ENCODE measurements at regions of chr1 and their contacts with region 1.

Region 1: GRCh38 chr1:3785456-3786157 is 10.7 kb downstream of the LRRC47 start:
- DNase-seq: peak; percentile 36
- H3K4me3 ChIP-seq: no peak overlapping the region
- H3K27ac ChIP-seq: no peak overlapping the region
- H3K4me1 ChIP-seq: no peaks in the 10 kb centered on the region
- H3K27me3 ChIP-seq: no peaks in the 10 kb centered on the region
- CTCF ChIP-seq: peak; percentile 50

Region 2: DNA sequence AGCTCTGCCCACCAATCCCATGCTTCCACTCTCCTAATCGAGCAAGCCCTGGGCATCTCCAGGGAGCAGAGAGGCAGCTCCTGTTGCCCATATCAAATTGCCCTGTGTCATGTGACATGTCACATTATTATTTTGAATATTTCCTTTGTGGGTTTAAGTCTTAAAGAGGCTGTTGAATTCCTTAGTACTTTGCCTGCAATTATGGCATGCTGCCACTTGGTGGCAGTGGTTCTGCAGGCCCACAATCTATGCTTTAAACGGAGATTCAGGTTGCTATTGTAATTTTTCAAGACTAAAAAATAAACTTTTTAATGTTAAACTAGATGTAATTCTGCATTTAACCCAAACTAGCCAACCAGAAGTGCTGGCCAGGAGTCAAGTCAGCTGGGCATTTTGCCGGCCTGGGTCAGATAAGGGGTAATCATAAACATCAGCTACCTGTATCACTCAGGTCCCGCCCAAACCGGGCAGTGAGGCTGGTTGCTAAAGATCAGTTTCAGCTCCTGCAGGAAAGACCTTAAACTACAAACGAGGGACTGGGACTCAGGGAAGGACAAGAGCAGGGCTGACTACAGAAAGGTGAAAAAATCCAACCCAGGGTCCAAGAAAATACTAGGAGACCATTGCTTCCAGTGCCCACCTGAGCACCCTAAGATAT is 368.4 kb before region 1 on chr1:
- CTCF ChIA-PET with region 1: no interaction called
- POLR2A ChIA-PET with region 1: no interaction called
- intact Hi-C with region 1: no loop called
- DNase-seq: no peak
- H3K4me3 ChIP-seq: no peak overlapping the region
- H3K27ac ChIP-seq: no peak overlapping the region
- H3K4me1 ChIP-seq: no peaks in the 10 kb centered on the region
- H3K27me3 ChIP-seq: peaks cover 20% of the 10 kb centered on the region
- CTCF ChIP-seq: peak; percentile 56

Region 3: GRCh38 chr1:3774946-3775489 is 10.6 kb before region 1 on chr1:
- CTCF ChIA-PET with region 1: interaction called, 10 read pairs
- POLR2A ChIA-PET with region 1: no interaction called
- intact Hi-C with region 1: no loop called
- DNase-seq: no peak
- H3K4me3 ChIP-seq: no peak overlapping the region
- H3K27ac ChIP-seq: no peak overlapping the region
- H3K4me1 ChIP-seq: peaks cover 9% of the 10 kb centered on the region
- H3K27me3 ChIP-seq: no peaks in the 10 kb centered on the region
- CTCF ChIP-seq: no peak

Region 4: DNA sequence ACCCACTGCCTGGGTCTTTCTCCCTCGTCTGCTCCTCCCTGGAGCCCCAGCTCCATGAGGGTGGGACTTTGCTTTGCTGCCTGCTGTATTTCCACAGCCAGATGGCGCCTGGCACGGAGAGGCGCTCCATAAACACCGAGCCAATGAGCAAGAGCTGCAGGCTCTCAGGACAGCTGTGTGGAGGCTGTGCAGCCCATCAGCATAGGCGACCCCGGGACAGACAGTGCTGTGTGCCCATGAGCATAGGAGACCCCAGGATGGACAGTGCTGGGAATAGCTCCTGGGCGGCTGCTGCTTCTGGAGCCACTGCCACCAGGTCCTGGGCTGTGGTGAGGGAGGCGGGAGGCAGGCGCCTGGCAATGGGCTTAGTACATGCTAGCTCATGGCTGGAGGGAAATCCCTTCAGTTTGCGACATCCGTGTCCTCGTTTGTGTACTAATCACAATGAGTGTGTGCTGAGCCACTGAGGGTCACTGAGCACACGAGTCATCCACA is 42.3 kb after region 1 on chr1:
- CTCF ChIA-PET with region 1: no interaction called
- POLR2A ChIA-PET with region 1: no interaction called
- intact Hi-C with region 1: no loop called
- DNase-seq: no peak
- H3K4me3 ChIP-seq: no peak overlapping the region
- H3K27ac ChIP-seq: no peak overlapping the region
- H3K4me1 ChIP-seq: no peaks in the 10 kb centered on the region
- H3K27me3 ChIP-seq: no peaks in the 10 kb centered on the region
- CTCF ChIP-seq: no peak